Psoas muscle (tissue), 8 donors: ENCODE measurements at regions of chr4 and their contacts with region 1.

Region 1: DNA sequence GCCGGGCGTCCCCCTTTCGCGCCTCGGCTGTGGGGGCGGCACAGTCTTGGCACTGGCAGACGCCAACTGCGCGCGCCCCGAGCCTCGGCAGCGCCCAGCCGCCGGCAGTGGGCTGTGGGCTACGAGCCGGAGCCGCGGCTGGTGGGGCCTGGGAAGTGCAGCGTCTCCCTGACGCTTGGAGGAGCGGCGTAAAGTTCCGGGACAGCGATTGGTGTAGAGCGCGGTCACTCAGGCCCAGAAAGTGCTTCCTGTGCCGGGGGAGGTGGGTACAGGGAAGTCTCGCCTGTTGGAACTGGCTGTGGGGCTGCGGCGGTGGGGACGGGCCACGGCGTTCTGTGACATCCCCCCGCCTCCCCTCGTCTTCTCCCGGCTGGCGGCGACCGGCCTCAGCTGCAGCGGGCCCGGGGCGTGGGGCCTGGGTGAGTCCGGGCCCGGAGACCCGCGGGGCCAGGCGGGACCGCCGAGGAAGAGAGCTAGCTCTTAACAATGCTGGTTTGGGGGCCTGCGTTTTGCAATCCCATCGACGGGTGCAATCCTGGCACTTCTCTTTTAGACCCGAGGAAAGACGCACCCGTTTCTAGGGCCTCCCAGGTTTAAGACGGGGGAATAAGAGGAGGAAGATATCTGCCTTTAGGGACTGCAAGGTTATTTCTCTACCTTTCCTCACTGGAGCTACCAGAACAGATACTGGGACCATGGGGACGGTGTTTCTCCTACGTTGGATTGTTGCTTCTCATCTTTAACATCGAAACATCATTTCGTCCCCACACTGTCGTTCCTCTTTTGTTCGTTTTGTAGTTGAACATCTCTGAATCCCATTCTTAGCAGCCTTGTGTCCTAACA is at the starts of genes RWDD4 and TRAPPC11:
- DNase-seq: peak; percentile 98 to 99
- ATAC-seq: peak; percentile 100
- H3K4me3 ChIP-seq: peak within 1 kb of the TSS; percentile 92
- H3K27ac ChIP-seq: peak within 1 kb of the TSS; percentile 89
- H3K4me1 ChIP-seq: peaks cover 18% of the 10 kb centered on the region
- H3K27me3 ChIP-seq: no peaks in the 10 kb centered on the region
- CTCF ChIP-seq: peak; percentile 31
- total RNA-seq, gene RWDD4: 19.1 to 33.5 (median 29.8) TPM
- total RNA-seq, gene TRAPPC11: 20.6 to 24.3 (median 23.9) TPM

Region 2: GRCh38 chr4:183618681-183619080 is 40.6 kb before region 1 on chr4:
- intact Hi-C with region 1: no loop called
- DNase-seq: peak in 1 of 2 donors; percentile 21
- ATAC-seq: peak in 2 of 4 donors; percentile 44 to 63
- H3K4me3 ChIP-seq: peak overlapping the region; percentile 51
- H3K27ac ChIP-seq: peak overlapping the region; percentile 81
- H3K4me1 ChIP-seq: peaks cover 7% of the 10 kb centered on the region
- H3K27me3 ChIP-seq: no peaks in the 10 kb centered on the region
- CTCF ChIP-seq: no peak

Region 3: GRCh38 chr4:183686461-183686860 is 27.2 kb after region 1 on chr4:
- intact Hi-C with region 1: loop called in 1 of 2 experiments (anchors 5 kb)
- DNase-seq: no peak
- ATAC-seq: no peak
- H3K4me3 ChIP-seq: no peak overlapping the region
- H3K27ac ChIP-seq: no peak overlapping the region
- H3K4me1 ChIP-seq: no peaks in the 10 kb centered on the region
- H3K27me3 ChIP-seq: no peaks in the 10 kb centered on the region
- CTCF ChIP-seq: no peak

Region 4: DNA sequence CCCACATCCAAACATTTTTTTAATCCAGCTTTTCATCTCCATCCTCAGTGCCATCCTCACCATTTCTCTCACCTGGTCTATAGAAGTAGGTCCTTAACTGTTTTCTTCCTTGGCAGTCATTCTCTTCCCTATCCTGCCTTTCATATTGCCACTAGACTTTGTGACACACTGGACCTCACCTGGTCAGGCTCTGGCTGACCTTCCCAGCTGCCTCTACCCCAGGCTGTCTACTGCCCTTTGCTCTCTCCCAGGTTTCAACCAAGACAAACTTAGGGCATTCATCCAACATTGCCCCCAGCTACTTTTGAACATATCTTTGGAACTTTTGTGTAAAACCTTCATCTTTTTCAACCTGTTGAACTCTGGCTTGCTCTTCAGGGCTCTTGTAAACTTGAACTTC is 39.7 kb after region 1 on chr4:
- intact Hi-C with region 1: no loop called
- DNase-seq: no peak
- ATAC-seq: no peak
- H3K4me3 ChIP-seq: no peak overlapping the region
- H3K27ac ChIP-seq: no peak overlapping the region
- H3K4me1 ChIP-seq: no peaks in the 10 kb centered on the region
- H3K27me3 ChIP-seq: no peaks in the 10 kb centered on the region
- CTCF ChIP-seq: no peak